Ovary (tissue), 10 donors: ENCODE measurements at regions of chr10 and their contacts with region 1.

Region 1: GRCh38 chr10:51047857-51048256 is 26.4 kb upstream of the PRKG1 start:
- DNase-seq: no peak
- H3K4me3 ChIP-seq: no peak overlapping the region
- H3K27ac ChIP-seq: no peak overlapping the region
- H3K4me1 ChIP-seq: peaks cover 2% of the 10 kb centered on the region
- H3K27me3 ChIP-seq: no peaks in the 10 kb centered on the region
- CTCF ChIP-seq: peak in 2 of 3 donors; percentile 25 to 41
- EP300 ChIP-seq: no peak
- POLR2A ChIP-seq: no peak

Region 2: GRCh38 chr10:51010977-51011376 is 36.9 kb before region 1 on chr10:
- intact Hi-C with region 1: loop called in 1 of 4 experiments (anchors 5 kb)
- DNase-seq: peak in 1 of 5 donors; percentile 25
- H3K4me3 ChIP-seq: no peak overlapping the region
- H3K27ac ChIP-seq: no peak overlapping the region
- H3K4me1 ChIP-seq: peaks cover 3% of the 10 kb centered on the region
- H3K27me3 ChIP-seq: no peaks in the 10 kb centered on the region
- CTCF ChIP-seq: peak; percentile 28 to 56 (median 53)
- EP300 ChIP-seq: no peak
- POLR2A ChIP-seq: no peak

Region 3: GRCh38 chr10:51137756-51138529 is 90.1 kb after region 1 on chr10:
- intact Hi-C with region 1: no loop called
- DNase-seq: no peak
- H3K4me3 ChIP-seq: no peak overlapping the region
- H3K27ac ChIP-seq: no peak overlapping the region
- H3K4me1 ChIP-seq: no peaks in the 10 kb centered on the region
- H3K27me3 ChIP-seq: no peaks in the 10 kb centered on the region
- CTCF ChIP-seq: no peak
- EP300 ChIP-seq: no peak
- POLR2A ChIP-seq: no peak